ENCODE measurements at regions of chr3 and their contacts with region 1.

Region 1: DNA sequence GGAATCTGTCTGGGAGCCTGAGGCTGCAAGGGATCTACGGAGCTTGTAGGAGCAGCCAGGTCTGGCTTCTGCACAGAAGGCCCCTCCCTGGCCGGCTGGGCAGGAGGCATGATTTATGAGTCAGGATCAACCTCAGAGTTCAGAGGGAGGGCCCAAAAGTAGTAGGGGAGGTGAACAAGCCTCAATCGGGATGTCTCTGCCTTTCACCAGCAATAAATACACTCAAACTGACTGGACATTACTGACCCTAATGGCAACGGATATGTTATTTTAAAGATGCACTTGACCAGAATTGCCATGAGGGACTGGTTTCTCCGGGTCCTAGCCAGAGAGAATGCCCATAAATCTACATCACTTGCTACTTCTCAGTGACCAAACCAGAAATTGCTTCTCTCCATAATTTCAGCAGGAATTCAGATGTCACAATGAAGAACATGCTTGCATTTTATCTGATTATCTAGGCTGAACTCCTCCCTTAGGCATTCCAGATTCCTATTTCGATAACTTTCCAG is 109.6 kb upstream of the LMOD3 start:
- DNase-seq: peak; percentile 80 to 92
- H3K4me3 ChIP-seq: peak overlapping the region; percentile 35; the same call in 1 of the 2 replicates
- H3K27ac ChIP-seq: peak overlapping the region; percentile 92
- H3K4me1 ChIP-seq: peaks cover 83% of the 10 kb centered on the region
- H3K27me3 ChIP-seq: no peaks in the 10 kb centered on the region
- CTCF ChIP-seq: no peak

Region 2: GRCh38 chr3:69191516-69191915 is 40.5 kb before region 1 on chr3:
- CTCF ChIA-PET with region 1: no interaction called
- POLR2A ChIA-PET with region 1: no interaction called
- intact Hi-C with region 1: no loop called
- DNase-seq: no peak
- H3K4me3 ChIP-seq: no peak overlapping the region
- H3K27ac ChIP-seq: no peak overlapping the region
- H3K4me1 ChIP-seq: no peaks in the 10 kb centered on the region
- H3K27me3 ChIP-seq: no peaks in the 10 kb centered on the region
- CTCF ChIP-seq: no peak

Region 3: DNA sequence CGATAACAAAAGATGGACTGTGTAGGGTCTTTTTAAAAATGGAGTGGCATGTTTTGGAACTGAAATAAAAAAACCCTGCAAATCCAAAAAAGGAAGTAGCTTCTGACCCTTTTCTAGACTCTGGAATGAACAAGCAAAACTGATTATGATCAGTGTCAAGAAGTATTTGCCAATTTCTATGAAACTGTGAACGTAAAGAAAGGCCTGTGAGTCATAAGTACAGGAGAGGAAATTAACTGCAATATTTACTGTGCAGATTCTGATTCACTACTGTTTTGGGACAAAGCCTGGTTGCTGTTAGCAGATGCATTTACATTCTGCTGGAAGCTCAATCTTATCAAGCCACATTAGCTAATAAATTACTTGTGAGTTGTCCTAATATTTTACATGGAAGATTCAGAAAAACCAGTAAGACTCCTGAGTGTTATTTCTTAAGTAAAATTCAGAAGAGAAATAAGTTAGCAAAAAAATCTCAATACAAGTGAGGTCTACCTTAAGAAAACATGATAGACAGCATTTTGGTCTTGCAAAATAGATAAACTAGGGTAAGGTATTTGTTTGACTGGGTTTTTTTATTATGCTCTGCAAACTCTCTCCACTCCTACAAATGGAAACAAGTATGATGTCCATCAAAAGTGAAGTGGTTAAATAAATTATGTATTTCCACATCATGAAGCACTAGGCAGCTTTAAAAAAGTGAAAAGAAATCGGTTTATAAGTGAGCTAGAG is 19.4 kb before region 1 on chr3:
- CTCF ChIA-PET with region 1: interaction called, 6 read pairs
- POLR2A ChIA-PET with region 1: interaction called, 33 read pairs
- intact Hi-C with region 1: no loop called
- DNase-seq: peak in 1 of 2 experiments; percentile 95
- H3K4me3 ChIP-seq: no peak overlapping the region
- H3K27ac ChIP-seq: peak overlapping the region; percentile 97
- H3K4me1 ChIP-seq: peaks cover 45% of the 10 kb centered on the region
- H3K27me3 ChIP-seq: no peaks in the 10 kb centered on the region
- CTCF ChIP-seq: no peak

Region 4: DNA sequence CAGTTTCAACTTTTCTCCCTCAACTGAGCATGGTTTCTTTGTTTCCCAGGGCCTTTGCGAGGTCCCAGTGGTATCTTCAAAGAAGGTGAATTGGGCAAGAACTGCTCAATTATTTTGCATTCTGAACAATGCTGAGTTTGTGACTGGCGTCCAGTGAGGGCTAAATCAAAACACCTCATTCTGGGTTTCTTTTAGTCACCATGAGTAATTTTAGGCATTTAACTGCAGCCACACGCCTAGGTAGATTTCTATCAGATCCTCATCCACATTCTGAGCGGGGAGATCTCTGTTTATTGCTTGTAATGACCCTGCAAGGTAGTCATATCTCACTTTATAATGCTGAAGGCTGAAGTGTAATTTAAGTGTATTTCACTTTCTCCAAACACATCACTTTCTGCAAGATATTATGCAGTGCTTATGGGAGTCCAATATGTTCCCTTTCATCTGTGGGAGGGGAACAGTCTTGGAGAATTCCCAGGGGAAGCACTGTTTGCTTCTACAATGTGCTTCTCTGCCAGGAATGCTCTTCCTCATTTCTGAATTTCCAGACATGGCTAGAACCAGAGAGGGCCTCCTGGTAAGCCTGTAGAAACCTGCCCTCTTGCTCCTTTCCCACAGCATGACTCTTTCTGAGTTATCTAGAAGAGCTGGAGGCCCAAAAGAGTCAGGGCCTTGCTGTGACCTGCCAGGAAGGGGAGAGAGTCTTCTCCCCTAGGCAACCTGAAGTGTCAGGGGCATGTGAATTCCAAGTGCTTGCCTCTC is 62.2 kb after region 1 on chr3:
- CTCF ChIA-PET with region 1: no interaction called
- POLR2A ChIA-PET with region 1: interaction called, 7 read pairs
- intact Hi-C with region 1: loop called (anchors 1 kb)
- DNase-seq: peak; percentile 33 to 77
- H3K4me3 ChIP-seq: no peak overlapping the region
- H3K27ac ChIP-seq: peak overlapping the region; percentile 66
- H3K4me1 ChIP-seq: peaks cover 17% of the 10 kb centered on the region
- H3K27me3 ChIP-seq: no peaks in the 10 kb centered on the region
- CTCF ChIP-seq: no peak

Region 5: GRCh38 chr3:69386556-69387385 is 154.8 kb after region 1 on chr3:
- CTCF ChIA-PET with region 1: no interaction called
- POLR2A ChIA-PET with region 1: interaction called, 10 read pairs
- intact Hi-C with region 1: no loop called
- DNase-seq: no peak
- H3K4me3 ChIP-seq: peak overlapping the region; percentile 38; the same call in 1 of the 2 replicates
- H3K27ac ChIP-seq: no peak overlapping the region
- H3K4me1 ChIP-seq: no peaks in the 10 kb centered on the region
- H3K27me3 ChIP-seq: peaks cover 21% of the 10 kb centered on the region; the same call in 1 of the 2 replicates
- CTCF ChIP-seq: no peak

Measured in PC-9 (cell line).